ENCODE measurements at regions of chr2 and their contacts with region 1.

Region 1: GRCh38 chr2:70142590-70143313 is 48.1 kb downstream of the C2orf42 start:
- DNase-seq: peak; percentile 99 to 100 (median 100)
- H3K4me3 ChIP-seq: peak overlapping the region in 1 of 2 donors; percentile 67
- H3K4me3 Mint-ChIP-seq: peak overlapping the region; percentile 85 to 96 (median 90)
- H3K27ac ChIP-seq: peak overlapping the region; percentile 97
- H3K27ac Mint-ChIP-seq: peak overlapping the region; percentile 97 to 100 (median 100)
- H3K4me1 ChIP-seq: peaks cover 56% of the 10 kb centered on the region
- H3K4me1 Mint-ChIP-seq: peaks cover 38 to 67% (median 52%) of the 10 kb centered on the region in 4 donors
- H3K27me3 ChIP-seq: no peaks in the 10 kb centered on the region
- H3K27me3 Mint-ChIP-seq: peaks cover 0 to 2% of the 10 kb centered on the region in 2 donors

Region 2: GRCh38 chr2:69946351-69947077 is 196.2 kb before region 1 on chr2:
- CTCF ChIA-PET with region 1: interaction called, 9 read pairs
- POLR2A ChIA-PET with region 1: interaction called, 11 read pairs
- intact Hi-C with region 1: loop called (anchors 10 kb)
- DNase-seq: peak; percentile 50 to 79 (median 64)
- H3K4me3 ChIP-seq: peak overlapping the region in 1 of 2 donors; percentile 21
- H3K4me3 Mint-ChIP-seq: peak overlapping the region in 7 of 8 donors; percentile 47 to 82 (median 64)
- H3K27ac ChIP-seq: peak overlapping the region; percentile 39
- H3K27ac Mint-ChIP-seq: peak overlapping the region; percentile 87 to 96 (median 90)
- H3K4me1 ChIP-seq: peaks cover 26% of the 10 kb centered on the region
- H3K4me1 Mint-ChIP-seq: peaks cover 24 to 36% (median 31%) of the 10 kb centered on the region in 4 donors
- H3K27me3 ChIP-seq: no peaks in the 10 kb centered on the region
- H3K27me3 Mint-ChIP-seq: no peaks in the 10 kb centered on the region

Region 3: DNA sequence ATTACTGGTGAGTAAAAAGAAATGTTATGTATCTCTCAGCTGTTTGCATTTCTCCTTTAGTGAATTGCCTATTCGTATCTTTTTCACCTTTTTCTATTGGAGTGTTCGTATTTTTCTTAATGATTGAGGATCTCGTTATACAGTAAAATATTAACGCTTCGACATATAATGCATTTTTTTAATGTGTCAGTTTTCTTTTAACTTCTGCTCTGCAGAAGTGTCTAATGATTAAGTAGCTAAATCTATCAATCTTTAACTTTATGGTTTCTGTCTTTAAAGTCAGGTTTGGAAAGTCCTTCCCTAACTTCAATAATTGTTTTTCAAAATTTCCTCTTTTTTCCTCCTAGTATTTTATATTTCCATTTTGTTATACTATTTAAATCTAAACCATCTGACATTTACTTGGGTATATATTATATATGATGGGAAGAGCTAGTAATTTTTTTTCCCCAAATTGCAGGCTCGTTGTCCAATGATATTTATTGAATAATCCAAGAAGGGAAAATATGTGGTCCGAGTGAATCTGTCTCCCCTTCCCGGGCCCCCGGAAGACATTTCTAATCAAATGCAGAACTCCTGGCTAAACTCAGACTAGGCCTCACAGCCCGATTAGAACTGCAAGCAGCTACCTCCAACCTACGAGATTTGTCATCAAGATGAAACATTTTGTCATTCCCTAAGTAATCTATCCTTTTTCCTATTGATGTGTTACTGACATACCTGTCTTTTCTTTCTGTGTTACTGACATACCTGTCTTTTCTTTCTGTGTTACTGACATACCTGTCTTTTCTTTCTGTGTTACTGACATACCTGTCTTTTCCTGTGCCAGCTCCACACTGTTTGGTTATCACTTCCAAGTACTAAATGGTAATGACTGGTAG is 38.3 kb before region 1 on chr2:
- CTCF ChIA-PET with region 1: interaction called, 6 read pairs
- POLR2A ChIA-PET with region 1: interaction called, 245 read pairs
- intact Hi-C with region 1: loop called (anchors 1 kb)
- DNase-seq: peak in 2 of 5 donors; percentile 32
- H3K4me3 ChIP-seq: peak overlapping the region in 1 of 2 donors; percentile 23
- H3K4me3 Mint-ChIP-seq: peak overlapping the region; percentile 62 to 82 (median 78)
- H3K27ac ChIP-seq: peak overlapping the region; percentile 57
- H3K27ac Mint-ChIP-seq: peak overlapping the region; percentile 87 to 95 (median 94)
- H3K4me1 ChIP-seq: peaks cover 47% of the 10 kb centered on the region
- H3K4me1 Mint-ChIP-seq: peaks cover 31 to 61% (median 46%) of the 10 kb centered on the region in 4 donors
- H3K27me3 ChIP-seq: no peaks in the 10 kb centered on the region
- H3K27me3 Mint-ChIP-seq: no peaks in the 10 kb centered on the region

Region 4: GRCh38 chr2:70124983-70125480 is 17.7 kb before region 1 on chr2:
- CTCF ChIA-PET with region 1: interaction called, 101 read pairs
- POLR2A ChIA-PET with region 1: interaction called, 719 read pairs
- intact Hi-C with region 1: loop called (anchors 1 kb)
- DNase-seq: peak in 2 of 5 donors; percentile 75 to 82
- H3K4me3 ChIP-seq: peak overlapping the region; percentile 29 to 99
- H3K4me3 Mint-ChIP-seq: peak overlapping the region; percentile 89 to 99 (median 94)
- H3K27ac ChIP-seq: peak overlapping the region; percentile 97
- H3K27ac Mint-ChIP-seq: peak overlapping the region; percentile 95 to 100 (median 100)
- H3K4me1 ChIP-seq: peaks cover 64% of the 10 kb centered on the region
- H3K4me1 Mint-ChIP-seq: peaks cover 34 to 73% (median 57%) of the 10 kb centered on the region in 4 donors
- H3K27me3 ChIP-seq: no peaks in the 10 kb centered on the region
- H3K27me3 Mint-ChIP-seq: peaks cover 0 to 3% of the 10 kb centered on the region in 2 donors

Region 5: GRCh38 chr2:70248181-70248847 is 105.6 kb after region 1 on chr2 and contains the start of gene TIA1:
- CTCF ChIA-PET with region 1: no interaction called
- POLR2A ChIA-PET with region 1: interaction called, 9 read pairs
- intact Hi-C with region 1: loop called (anchors 1 kb)
- DNase-seq: peak; percentile 95 to 99 (median 98)
- H3K4me3 ChIP-seq: peak within 1 kb of the TSS; percentile 39 to 89
- H3K4me3 Mint-ChIP-seq: peak within 1 kb of the TSS; percentile 90 to 99 (median 96)
- H3K27ac ChIP-seq: peak within 1 kb of the TSS; percentile 95
- H3K27ac Mint-ChIP-seq: peak within 1 kb of the TSS; percentile 93 to 99 (median 99)
- H3K4me1 ChIP-seq: peaks cover 39% of the 10 kb centered on the region
- H3K4me1 Mint-ChIP-seq: peaks cover 26 to 54% (median 33%) of the 10 kb centered on the region in 4 donors
- H3K27me3 ChIP-seq: no peaks in the 10 kb centered on the region
- H3K27me3 Mint-ChIP-seq: peaks cover 2 to 4% of the 10 kb centered on the region in 2 donors
- total RNA-seq, gene TIA1: 200 to 208 TPM